Activated CD4-positive, alpha-beta T cell treated with anti-CD3 and anti-CD28 coated beads for 36 hours (primary cell): ENCODE measurements at regions of chr15 and their contacts with region 1.

Region 1: DNA sequence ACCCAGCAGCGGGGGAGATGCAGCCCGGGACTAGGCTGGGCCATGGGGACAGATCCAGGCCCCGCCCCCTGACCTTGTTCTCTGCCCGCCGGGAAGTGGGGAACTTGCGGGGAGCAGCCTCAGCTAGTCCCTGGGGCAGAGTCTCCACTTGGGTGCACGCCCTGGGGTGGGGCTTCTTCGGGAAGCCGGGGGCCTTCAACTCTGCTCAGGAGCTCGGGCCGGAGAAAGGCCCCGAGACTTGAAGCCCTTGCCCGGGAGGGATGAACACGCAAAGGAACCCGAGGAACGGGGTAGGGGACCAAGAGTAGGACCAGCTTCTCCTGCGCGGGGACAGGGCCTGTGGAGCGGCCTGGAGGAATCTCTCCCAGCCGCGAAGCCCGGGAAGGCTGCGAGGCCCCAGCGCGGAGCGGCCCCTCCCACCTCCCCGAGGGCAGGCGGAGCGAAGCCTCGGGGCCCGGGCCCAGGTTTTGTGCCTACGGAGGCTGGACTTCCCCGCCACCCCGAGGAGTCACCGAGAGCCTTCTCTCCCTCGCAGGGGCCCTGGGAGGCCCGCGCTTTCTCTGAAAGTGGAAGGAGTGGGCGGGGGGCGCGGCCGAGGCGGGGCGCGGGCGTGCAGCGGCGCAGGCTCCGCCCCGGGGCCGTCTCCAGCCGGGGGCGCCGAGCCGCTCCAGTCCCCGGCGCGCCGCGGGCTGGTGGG is at the start of gene ITPKA:
- DNase-seq: peak; percentile 97
- ATAC-seq: peak; percentile 85
- H3K4me3 Mint-ChIP-seq: peak within 1 kb of the TSS; percentile 58
- H3K27ac Mint-ChIP-seq: peak within 1 kb of the TSS; percentile 37
- H3K4me1 Mint-ChIP-seq: peaks cover 38% of the 10 kb centered on the region
- H3K27me3 Mint-ChIP-seq: peaks cover 40% of the 10 kb centered on the region
- total RNA-seq, gene ITPKA: 2.5 to 4.2 TPM

Region 2: GRCh38 chr15:40893733-40894688 is 599.3 kb before region 1 on chr15 and contains the start of gene VPS18:
- CTCF ChIA-PET with region 1: no interaction called
- POLR2A ChIA-PET with region 1: no interaction called
- intact Hi-C with region 1: loop called in 1 of 2 experiments (anchors 1 kb)
- DNase-seq: peak; percentile 100
- ATAC-seq: peak; percentile 99
- H3K4me3 Mint-ChIP-seq: peak within 1 kb of the TSS; percentile 88
- H3K27ac Mint-ChIP-seq: peak within 1 kb of the TSS; percentile 86
- H3K4me1 Mint-ChIP-seq: peaks cover 29% of the 10 kb centered on the region
- H3K27me3 Mint-ChIP-seq: no peaks in the 10 kb centered on the region
- total RNA-seq, gene VPS18: 6.2 TPM

Region 3: GRCh38 chr15:41401904-41402267 is 91.5 kb before region 1 on chr15:
- CTCF ChIA-PET with region 1: no interaction called
- POLR2A ChIA-PET with region 1: no interaction called
- intact Hi-C with region 1: loop called in 1 of 2 experiments (anchors 1 kb)
- DNase-seq: no peak
- ATAC-seq: no peak
- H3K4me3 Mint-ChIP-seq: peak overlapping the region; percentile 94
- H3K27ac Mint-ChIP-seq: peak overlapping the region; percentile 92
- H3K4me1 Mint-ChIP-seq: peaks cover 13% of the 10 kb centered on the region
- H3K27me3 Mint-ChIP-seq: no peaks in the 10 kb centered on the region

Region 4: GRCh38 chr15:41544650-41545015 is 51.3 kb after region 1 on chr15:
- CTCF ChIA-PET with region 1: no interaction called
- POLR2A ChIA-PET with region 1: interaction called, 3 read pairs
- intact Hi-C with region 1: loop called (anchors 1 to 5 kb)
- DNase-seq: peak; percentile 21
- ATAC-seq: no peak
- H3K4me3 Mint-ChIP-seq: peak overlapping the region; percentile 95
- H3K27ac Mint-ChIP-seq: peak overlapping the region; percentile 91
- H3K4me1 Mint-ChIP-seq: peaks cover 12% of the 10 kb centered on the region
- H3K27me3 Mint-ChIP-seq: no peaks in the 10 kb centered on the region

Region 5: DNA sequence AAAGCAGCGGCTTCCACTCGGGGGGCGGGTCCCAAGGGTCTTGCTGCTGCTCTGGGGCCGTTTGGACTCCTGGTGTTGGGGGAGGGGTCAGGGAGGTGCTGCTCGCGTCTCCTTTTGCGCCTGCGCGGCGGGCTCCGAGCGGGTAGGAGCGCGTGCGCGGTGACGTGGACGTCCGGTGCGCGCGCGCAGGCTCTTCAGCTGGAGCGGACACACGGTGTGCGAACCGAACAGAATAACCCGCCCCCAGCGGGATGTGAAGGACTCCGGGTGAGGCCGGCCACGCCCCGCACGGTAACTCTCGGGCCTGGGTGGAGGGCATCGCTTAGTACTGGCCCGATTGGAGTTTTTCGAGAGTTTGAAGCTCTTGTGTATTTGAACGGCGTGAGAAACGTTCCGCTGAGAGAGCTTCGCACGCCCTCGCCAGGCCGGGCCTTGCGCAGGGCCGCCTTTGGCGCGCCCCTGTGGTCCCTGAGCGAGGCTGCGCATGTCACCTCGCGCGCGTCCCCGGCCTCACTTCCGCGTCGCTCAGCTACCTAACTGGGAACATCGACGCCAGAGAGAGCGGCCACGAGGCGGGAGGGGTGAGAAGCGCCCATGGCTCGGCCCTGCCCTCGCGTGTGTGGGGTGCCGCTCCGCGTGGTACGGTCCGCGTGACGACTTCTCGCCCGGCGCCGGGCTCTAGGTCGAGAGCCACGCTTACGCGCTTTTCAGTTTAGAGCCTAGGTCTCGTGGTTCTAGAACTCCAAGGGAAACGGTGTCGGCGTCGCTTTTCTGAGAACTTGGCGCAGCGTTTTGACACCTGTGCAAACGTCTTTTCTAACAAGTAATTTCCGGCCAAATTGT is 167.1 kb after region 1 on chr15 and contains the start of gene MGA:
- CTCF ChIA-PET with region 1: no interaction called
- POLR2A ChIA-PET with region 1: no interaction called
- intact Hi-C with region 1: loop called in 1 of 2 experiments (anchors 1 kb)
- DNase-seq: peak; percentile 94
- ATAC-seq: peak; percentile 89
- H3K4me3 Mint-ChIP-seq: peak within 1 kb of the TSS; percentile 92
- H3K27ac Mint-ChIP-seq: peak within 1 kb of the TSS; percentile 95
- H3K4me1 Mint-ChIP-seq: peaks cover 42% of the 10 kb centered on the region
- H3K27me3 Mint-ChIP-seq: peaks cover 7% of the 10 kb centered on the region
- total RNA-seq, gene MGA: 33.7 to 39.3 TPM

Region 6: DNA sequence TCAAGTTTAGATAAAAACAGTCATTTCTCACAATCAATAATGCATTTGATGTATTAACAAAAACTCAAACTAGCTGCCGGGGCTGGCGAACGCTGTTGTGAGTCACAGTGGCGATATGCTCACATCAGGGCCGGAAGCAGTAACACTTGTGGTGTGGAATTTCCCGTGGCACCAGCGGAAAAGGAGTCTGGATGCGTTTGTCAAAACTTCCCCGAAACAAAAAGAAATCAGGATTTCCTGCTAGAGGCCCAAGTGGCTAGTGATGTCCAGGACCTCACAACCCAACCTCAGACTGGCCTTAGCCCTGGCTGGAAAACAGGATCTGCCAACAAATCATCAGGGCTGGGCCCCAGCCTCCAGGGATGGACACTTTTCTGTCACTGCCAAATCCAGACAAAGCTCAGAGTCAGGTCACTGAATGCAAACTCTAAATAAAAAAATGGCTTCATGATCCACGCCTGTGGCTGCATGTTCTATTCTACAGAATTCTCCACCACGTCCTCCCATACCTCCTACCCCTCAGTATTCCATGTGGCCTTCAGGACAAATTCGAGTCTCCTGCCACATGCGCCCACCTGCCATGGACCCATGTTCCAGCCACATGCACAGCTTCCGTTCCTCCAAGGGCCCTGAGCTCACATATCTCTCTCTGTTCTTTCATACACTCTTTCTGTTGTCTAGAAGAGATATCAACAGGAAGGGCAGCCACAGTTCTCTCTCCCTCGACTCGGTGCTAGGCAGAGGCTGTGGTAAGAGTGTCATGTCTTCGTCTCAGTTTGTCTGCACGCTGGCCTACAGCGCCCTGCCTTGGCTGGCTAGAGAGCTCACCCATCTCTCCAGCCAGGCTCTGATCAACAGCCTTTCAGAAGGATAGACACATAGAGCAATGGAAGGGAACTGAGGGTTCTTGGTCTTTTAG is 443.6 kb after region 1 on chr15:
- CTCF ChIA-PET with region 1: no interaction called
- POLR2A ChIA-PET with region 1: no interaction called
- intact Hi-C with region 1: loop called in 1 of 2 experiments (anchors 2 kb)
- DNase-seq: peak; percentile 91
- ATAC-seq: peak; percentile 62
- H3K4me3 Mint-ChIP-seq: peak overlapping the region; percentile 60
- H3K27ac Mint-ChIP-seq: peak overlapping the region; percentile 100
- H3K4me1 Mint-ChIP-seq: peaks cover 74% of the 10 kb centered on the region
- H3K27me3 Mint-ChIP-seq: no peaks in the 10 kb centered on the region

Region 7: DNA sequence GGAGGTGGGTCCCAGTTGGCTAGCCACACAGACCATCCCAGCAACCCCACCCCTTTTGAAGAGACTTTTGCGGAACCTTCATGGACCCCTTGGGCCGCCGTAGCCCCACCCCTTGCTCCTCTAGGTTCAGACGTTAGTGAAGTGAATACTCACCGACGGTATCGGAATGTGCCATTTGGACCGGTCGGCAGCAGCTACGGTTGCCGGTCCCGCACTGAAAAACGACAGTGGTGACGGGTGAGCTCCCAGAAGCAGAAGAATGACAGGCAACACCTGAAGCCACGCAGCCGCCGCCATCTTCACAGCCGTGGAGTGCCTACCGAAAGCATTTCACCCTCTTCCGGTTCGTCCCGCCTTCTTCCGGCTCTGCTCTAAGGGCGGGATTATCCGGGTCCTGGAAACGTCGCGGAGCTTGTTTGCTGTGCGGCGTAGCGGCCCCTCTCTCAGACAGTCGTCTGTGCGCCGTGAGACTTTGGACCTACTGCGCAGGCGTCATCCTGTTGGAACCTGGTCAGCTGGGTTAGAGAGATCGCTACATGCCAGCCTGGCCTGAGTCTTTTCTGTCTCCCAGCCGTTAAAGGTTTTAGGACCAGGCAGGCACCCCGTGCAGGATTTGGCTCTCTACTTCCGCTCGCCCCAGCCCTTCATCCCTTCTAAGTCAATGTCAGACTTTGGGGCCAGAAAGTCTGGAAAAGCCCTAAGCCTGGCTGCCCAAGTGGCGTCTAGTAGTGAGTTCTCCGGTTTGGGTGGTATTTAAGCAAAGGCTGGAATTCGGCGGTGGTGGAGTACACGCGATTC is 779.9 kb after region 1 on chr15 and contains the starts of genes GANC and TMEM87A:
- CTCF ChIA-PET with region 1: no interaction called
- POLR2A ChIA-PET with region 1: no interaction called
- intact Hi-C with region 1: loop called in 1 of 2 experiments (anchors 1 kb)
- DNase-seq: peak; percentile 98
- ATAC-seq: peak; percentile 96
- H3K4me3 Mint-ChIP-seq: peak within 1 kb of the TSS; percentile 81
- H3K27ac Mint-ChIP-seq: peak within 1 kb of the TSS; percentile 98
- H3K4me1 Mint-ChIP-seq: peaks cover 43% of the 10 kb centered on the region
- H3K27me3 Mint-ChIP-seq: no peaks in the 10 kb centered on the region
- total RNA-seq, gene GANC: 24.5 to 24.8 TPM
- total RNA-seq, gene TMEM87A: 20.5 to 29.0 TPM